Head of caudate nucleus (tissue), 42 donors: ENCODE measurements at regions of chr3 and their contacts with region 1.

Region 1: DNA sequence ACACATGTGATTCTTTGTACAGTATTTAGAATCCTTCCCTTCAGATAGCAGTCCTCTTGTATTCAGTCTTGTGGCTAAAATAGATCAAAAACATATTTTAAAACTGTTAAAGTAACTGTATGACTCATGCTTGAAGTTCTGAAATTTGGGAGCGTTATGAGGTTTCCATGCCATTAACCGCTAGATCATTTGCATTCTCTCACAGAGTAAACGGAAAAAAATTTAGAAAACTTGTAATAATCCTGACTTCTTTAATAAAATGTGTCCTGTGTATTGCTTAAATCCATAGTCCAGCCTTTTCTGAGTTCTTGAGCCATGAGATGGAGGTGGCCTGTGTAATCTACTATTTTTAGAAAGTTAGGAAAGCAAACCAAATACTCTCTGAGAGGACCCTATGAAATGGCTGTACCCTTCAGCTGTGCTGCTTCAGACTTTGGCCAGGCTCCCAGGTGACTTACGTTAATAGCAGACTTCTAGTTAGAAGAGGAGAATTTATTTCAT is 33.8 kb downstream of the MBNL1 start:
- DNase-seq: peak in 6 of 42 donors; percentile 23 to 61 (median 34)

Region 2: DNA sequence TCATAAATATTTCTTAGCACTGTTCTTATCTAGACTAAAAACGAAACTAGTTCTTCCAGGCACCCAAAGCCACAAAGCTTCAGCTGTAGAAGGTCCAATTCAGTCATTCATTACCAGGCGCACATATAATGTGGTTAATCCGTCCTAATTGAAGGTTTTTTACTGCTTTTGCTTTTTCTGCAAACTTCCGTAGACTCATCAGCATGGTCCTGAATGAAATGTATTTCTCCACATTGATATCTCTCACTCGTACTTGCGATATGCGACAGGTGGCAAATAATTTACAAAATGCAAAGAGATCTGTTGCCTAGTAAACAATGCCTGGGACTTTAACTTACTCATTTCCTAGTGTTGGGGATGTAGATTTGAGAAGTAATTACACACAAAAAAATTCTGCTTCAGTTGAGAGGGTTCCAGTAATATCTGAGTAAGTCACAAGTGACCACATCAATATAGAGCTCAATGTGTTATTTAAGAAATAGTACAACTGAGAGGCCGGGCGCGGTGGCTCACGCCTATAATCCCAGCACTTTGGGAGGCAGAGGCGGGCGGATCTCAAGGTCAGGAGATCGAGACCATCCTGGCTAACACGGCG is 108.8 kb before region 1 on chr3:
- intact Hi-C with region 1: no loop called
- DNase-seq: no peak

Region 3: DNA sequence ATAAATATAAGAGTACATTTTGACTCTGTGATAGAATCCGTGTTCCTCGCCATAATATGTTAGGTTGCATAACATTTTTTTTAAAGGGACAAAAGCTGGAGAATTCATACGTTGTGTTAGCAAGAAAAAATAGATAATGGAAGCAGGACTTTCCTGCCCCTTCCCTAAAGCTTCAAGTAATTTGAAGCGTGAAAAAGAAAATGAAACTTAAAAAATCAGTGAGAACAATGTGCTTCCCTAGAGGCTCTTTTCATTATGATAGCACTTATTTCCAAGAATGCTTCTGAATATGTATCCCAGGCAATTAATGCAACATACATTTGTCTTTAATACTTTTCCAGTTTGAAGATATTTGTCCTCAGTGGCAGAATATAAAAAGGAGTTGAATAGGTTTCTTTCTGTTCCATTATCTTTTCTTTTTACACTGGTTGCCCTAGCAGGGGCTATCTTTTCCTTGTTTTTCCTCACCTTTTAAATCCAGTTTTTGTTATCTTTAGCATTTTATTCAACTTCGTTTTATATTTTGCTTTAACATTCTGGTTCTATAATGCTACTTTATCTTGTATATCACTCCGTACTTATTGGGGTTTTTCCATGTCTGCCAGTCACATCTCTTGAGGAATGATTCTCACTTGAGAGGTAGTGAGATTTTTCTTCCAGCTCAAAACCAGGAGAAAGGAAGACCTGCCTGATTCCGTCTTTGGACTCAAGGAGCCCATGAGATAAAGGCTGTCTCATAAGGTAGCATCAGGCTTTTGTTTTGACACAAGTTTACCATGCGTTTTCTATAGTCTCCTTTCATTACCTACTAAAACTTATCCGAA is 80.0 kb after region 1 on chr3:
- intact Hi-C with region 1: loop called (anchors 5 kb)
- DNase-seq: no peak